ENCODE measurements at regions of chr4 and their contacts with region 1.

Region 1: GRCh38 chr4:158253350-158253980 is 43.2 kb downstream of the TMEM144 start:
- DNase-seq: no peak
- H3K4me3 ChIP-seq: no peak overlapping the region
- H3K27ac ChIP-seq: no peak overlapping the region
- H3K4me1 ChIP-seq: peaks cover 11% of the 10 kb centered on the region
- H3K27me3 ChIP-seq: no peaks in the 10 kb centered on the region
- CTCF ChIP-seq: peak; percentile 74

Region 2: GRCh38 chr4:158042591-158043030 is 210.9 kb before region 1 on chr4:
- intact Hi-C with region 1: no loop called
- DNase-seq: no peak
- H3K4me3 ChIP-seq: no peak overlapping the region
- H3K27ac ChIP-seq: no peak overlapping the region
- H3K4me1 ChIP-seq: no peaks in the 10 kb centered on the region
- H3K27me3 ChIP-seq: no peaks in the 10 kb centered on the region
- CTCF ChIP-seq: no peak

Region 3: GRCh38 chr4:158193171-158193749 is 60.2 kb before region 1 on chr4:
- intact Hi-C with region 1: loop called (anchors 10 kb)
- DNase-seq: no peak
- H3K4me3 ChIP-seq: no peak overlapping the region
- H3K27ac ChIP-seq: no peak overlapping the region
- H3K4me1 ChIP-seq: peaks cover 13% of the 10 kb centered on the region
- H3K27me3 ChIP-seq: no peaks in the 10 kb centered on the region
- CTCF ChIP-seq: peak; percentile 72